MCF 10A (cell line): ENCODE measurements at regions of chr12 and their contacts with region 1.

Region 1: GRCh38 chr12:55738123-55739024 is 4.5 kb upstream of the GDF11 start:
- DNase-seq: peak; percentile 86
- H3K4me3 Mint-ChIP-seq: peak overlapping the region; percentile 74
- H3K27ac Mint-ChIP-seq: peak overlapping the region; percentile 73
- H3K4me1 Mint-ChIP-seq: peaks cover 38% of the 10 kb centered on the region
- H3K27me3 Mint-ChIP-seq: peaks cover 17% of the 10 kb centered on the region
- CTCF ChIP-seq: peak; percentile 78

Region 2: DNA sequence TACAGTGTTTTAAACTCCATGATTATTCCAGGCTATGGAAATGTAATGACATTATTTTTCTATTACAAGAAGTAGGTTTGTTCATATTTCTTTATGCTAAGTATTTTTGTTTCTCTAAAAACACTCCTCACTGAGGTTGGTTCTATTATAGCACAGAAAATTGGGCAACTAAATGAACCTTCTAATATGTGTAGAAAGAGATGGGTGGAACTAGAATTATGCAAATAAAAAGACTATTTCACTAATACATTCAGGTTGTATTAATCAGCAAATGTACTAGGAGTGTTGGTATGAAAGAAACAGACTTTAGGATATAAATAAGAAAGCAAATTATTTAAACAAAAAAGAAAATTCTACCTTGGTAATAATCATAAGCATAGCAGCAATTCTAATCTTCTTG is 289.5 kb before region 1 on chr12:
- CTCF ChIA-PET with region 1: no interaction called
- POLR2A ChIA-PET with region 1: no interaction called
- intact Hi-C with region 1: no loop called
- DNase-seq: no peak
- H3K4me3 Mint-ChIP-seq: no peak overlapping the region
- H3K27ac Mint-ChIP-seq: no peak overlapping the region
- H3K4me1 Mint-ChIP-seq: no peaks in the 10 kb centered on the region
- H3K27me3 Mint-ChIP-seq: peaks cover 40% of the 10 kb centered on the region
- CTCF ChIP-seq: no peak

Region 3: GRCh38 chr12:55659486-55660385 is 78.6 kb before region 1 on chr12:
- CTCF ChIA-PET with region 1: no interaction called
- POLR2A ChIA-PET with region 1: no interaction called
- intact Hi-C with region 1: loop called (anchors 1 kb)
- DNase-seq: peak; percentile 30
- H3K4me3 Mint-ChIP-seq: no peak overlapping the region
- H3K27ac Mint-ChIP-seq: no peak overlapping the region
- H3K4me1 Mint-ChIP-seq: no peaks in the 10 kb centered on the region
- H3K27me3 Mint-ChIP-seq: peaks cover 43% of the 10 kb centered on the region
- CTCF ChIP-seq: peak; percentile 39

Region 4: DNA sequence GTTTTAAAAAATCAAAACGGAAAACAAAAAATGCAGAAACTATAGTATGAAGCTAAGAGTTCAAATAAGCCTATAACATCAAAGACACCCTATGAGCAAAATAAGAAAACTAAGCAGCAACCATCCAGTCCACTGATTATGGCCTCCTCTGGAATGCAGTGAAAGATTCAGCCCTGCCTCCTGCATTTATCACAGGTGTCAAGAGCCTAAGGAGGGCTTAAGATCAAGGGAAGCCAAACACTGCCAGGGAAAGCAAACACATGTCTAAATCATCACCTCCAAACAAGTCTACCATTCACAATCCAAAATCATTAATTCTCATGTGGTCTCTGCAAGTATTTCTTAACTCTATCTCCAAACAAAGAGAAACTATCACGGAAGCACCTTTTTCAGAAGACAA is 50.8 kb after region 1 on chr12:
- CTCF ChIA-PET with region 1: interaction called, 16 read pairs
- POLR2A ChIA-PET with region 1: no interaction called
- intact Hi-C with region 1: no loop called
- DNase-seq: no peak
- H3K4me3 Mint-ChIP-seq: no peak overlapping the region
- H3K27ac Mint-ChIP-seq: no peak overlapping the region
- H3K4me1 Mint-ChIP-seq: no peaks in the 10 kb centered on the region
- H3K27me3 Mint-ChIP-seq: no peaks in the 10 kb centered on the region
- CTCF ChIP-seq: no peak

Region 5: DNA sequence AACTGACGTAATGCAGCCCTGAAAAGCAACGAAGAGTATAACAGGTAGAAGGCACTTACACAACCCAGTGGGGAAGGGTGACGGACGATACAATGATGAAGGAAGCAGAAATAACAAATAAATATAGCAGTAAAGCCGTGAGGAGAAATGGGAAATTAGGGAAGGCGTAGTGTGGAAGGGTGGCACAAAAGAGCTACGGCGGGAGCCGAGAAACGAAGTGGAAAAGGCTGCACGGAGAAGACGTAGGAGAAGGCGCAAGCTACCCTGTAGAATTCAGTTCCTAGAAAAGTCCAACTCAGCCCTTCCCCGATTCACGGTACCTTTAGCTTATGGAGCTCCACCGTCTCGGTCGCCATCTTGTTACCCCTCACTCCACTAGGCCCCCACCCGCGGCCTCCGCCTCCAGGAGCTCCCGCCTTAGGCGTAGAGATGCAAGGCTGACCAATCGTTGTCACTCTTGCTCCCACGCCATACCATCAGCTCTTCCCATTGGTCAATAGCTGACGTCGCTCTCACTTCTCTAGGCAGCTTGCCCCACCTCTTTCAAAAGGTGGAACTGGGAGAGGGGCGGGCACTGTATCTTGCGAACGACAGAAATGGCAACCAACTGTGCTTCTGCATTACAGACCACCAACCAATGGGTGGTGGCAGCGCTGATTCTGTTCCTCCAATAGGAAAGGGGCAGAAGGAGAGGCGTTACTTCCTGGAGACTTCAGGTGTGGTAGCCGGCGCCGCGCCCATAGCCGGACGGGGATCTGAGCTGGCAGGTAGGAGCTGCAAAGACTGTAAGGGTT is 79.2 kb after region 1 on chr12 and contains the starts of genes ORMDL2 and SARNP:
- CTCF ChIA-PET with region 1: interaction called, 14 read pairs
- POLR2A ChIA-PET with region 1: interaction called, 21 read pairs
- intact Hi-C with region 1: no loop called
- DNase-seq: peak; percentile 100
- H3K4me3 Mint-ChIP-seq: no peak within 1 kb of the TSS
- H3K27ac Mint-ChIP-seq: no peak within 1 kb of the TSS
- H3K4me1 Mint-ChIP-seq: peaks cover 19% of the 10 kb centered on the region
- H3K27me3 Mint-ChIP-seq: no peaks in the 10 kb centered on the region
- CTCF ChIP-seq: no peak
- total RNA-seq, gene ORMDL2: 54.6 and 55.9 TPM in 2 replicates
- total RNA-seq, gene SARNP: 39.2 and 61.1 TPM in 2 replicates

Region 6: DNA sequence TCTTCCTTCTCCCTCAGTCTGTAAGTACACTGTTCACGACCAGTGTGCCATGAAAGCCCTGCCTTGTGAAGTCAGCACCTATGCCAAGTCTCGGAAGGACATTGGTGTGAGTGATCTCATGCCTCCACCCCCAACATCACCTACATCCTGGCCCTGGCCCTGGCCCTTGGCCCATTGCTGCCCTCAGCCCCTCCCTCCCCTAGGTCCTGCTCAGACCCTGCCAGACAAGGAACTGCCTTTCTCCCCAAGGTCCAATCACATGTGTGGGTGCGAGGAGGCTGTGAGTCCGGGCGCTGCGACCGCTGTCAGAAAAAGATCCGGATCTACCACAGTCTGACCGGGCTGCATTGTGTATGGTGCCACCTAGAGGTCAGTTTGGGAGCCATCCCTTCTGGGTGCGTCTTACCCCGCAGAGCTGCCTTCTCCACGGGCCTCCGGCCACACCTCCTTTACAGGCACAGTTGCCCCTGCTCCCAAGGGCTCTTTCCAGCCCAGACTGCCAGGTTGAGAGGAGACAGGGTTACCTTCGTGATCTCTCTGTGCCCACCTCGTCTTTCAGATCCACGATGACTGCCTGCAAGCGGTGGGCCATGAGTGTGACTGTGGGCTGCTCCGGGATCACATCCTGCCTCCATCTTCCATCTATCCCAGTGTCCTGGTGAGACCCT is 201.8 kb after region 1 on chr12:
- CTCF ChIA-PET with region 1: interaction called, 11 read pairs
- POLR2A ChIA-PET with region 1: interaction called, 6 read pairs
- intact Hi-C with region 1: loop called (anchors 2 kb)
- DNase-seq: peak; percentile 91
- H3K4me3 Mint-ChIP-seq: peak overlapping the region; percentile 48
- H3K27ac Mint-ChIP-seq: peak overlapping the region; percentile 52
- H3K4me1 Mint-ChIP-seq: peaks cover 49% of the 10 kb centered on the region
- H3K27me3 Mint-ChIP-seq: no peaks in the 10 kb centered on the region
- CTCF ChIP-seq: peak; percentile 85

Region 7: GRCh38 chr12:56041552-56042429 is 303.4 kb after region 1 on chr12 and contains the start of gene RPS26:
- CTCF ChIA-PET with region 1: interaction called, 13 read pairs
- POLR2A ChIA-PET with region 1: interaction called, 3 read pairs
- intact Hi-C with region 1: loop called (anchors 1 kb)
- DNase-seq: peak; percentile 99
- H3K4me3 Mint-ChIP-seq: peak within 1 kb of the TSS; percentile 81
- H3K27ac Mint-ChIP-seq: peak within 1 kb of the TSS; percentile 91
- H3K4me1 Mint-ChIP-seq: peaks cover 7% of the 10 kb centered on the region
- H3K27me3 Mint-ChIP-seq: no peaks in the 10 kb centered on the region
- CTCF ChIP-seq: peak; percentile 33
- total RNA-seq, gene RPS26: 45.1 and 67.3 TPM in 2 replicates

Region 8: DNA sequence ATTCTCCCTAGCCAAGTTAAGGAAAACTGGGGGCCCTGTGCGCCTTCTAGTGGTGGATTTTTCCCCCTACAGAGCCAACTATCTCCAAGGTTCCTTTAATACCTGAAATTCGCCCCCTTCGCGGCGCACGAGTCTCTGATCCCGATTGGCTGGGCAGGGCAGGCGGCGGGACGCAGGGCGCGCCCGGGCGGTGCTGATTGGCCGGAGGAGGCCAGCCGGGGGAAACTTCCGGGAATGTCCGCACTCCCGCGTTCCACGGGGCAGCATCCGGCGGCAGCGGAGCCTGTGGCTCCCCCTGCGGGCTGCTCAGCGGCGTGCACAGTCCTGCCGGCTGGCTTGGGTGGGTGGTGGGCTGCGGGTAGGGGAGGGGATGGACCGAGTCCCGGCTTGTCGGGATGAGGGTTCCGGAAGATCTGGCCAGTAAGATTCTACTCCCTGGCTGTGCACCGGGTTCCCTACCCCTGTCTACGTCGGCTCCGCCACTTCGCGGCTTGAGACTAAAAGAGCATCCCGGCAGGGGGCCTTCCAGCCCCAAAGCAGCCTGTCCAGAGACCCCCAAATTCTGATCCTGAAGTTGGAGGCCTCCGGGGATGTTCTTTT is 485.8 kb after region 1 on chr12 and contains the start of gene NABP2:
- CTCF ChIA-PET with region 1: interaction called, 4 read pairs
- POLR2A ChIA-PET with region 1: no interaction called
- intact Hi-C with region 1: loop called (anchors 10 kb)
- DNase-seq: peak; percentile 98
- H3K4me3 Mint-ChIP-seq: peak within 1 kb of the TSS; percentile 82
- H3K27ac Mint-ChIP-seq: peak within 1 kb of the TSS; percentile 88
- H3K4me1 Mint-ChIP-seq: peaks cover 24% of the 10 kb centered on the region
- H3K27me3 Mint-ChIP-seq: no peaks in the 10 kb centered on the region
- CTCF ChIP-seq: peak; percentile 78
- total RNA-seq, gene NABP2: 53.3 and 56.2 TPM in 2 replicates